Activated T-helper 2 cell treated with anti-CD3 and anti-CD28 coated beads, Interferon-gamma antibody, Interleukin-2, Interleukin-4, amounts not matched to agents 10 μg/mL and 5 μg/mL and 100 μg/mL, durations not matched to agents 14 hours and 24 hours and 36 hours (primary cell): ENCODE measurements at regions of chr1 and their contacts with region 1.

Region 1: GRCh38 chr1:192516776-192517297 is 58.7 kb upstream of the RGS1 start:
- DNase-seq: peak; percentile 69
- H3K4me3 Mint-ChIP-seq: peak overlapping the region; percentile 66
- H3K27ac Mint-ChIP-seq: peak overlapping the region; percentile 77
- H3K4me1 Mint-ChIP-seq: peaks cover 55% of the 10 kb centered on the region
- H3K27me3 Mint-ChIP-seq: peaks cover 2% of the 10 kb centered on the region

Region 2: GRCh38 chr1:192430644-192431043 is 86.2 kb before region 1 on chr1:
- intact Hi-C with region 1: no loop called
- DNase-seq: no peak
- H3K4me3 Mint-ChIP-seq: no peak overlapping the region
- H3K27ac Mint-ChIP-seq: no peak overlapping the region
- H3K4me1 Mint-ChIP-seq: no peaks in the 10 kb centered on the region
- H3K27me3 Mint-ChIP-seq: no peaks in the 10 kb centered on the region

Region 3: GRCh38 chr1:192477630-192478029 is 39.2 kb before region 1 on chr1:
- intact Hi-C with region 1: loop called (anchors 5 kb)
- DNase-seq: no peak
- H3K4me3 Mint-ChIP-seq: no peak overlapping the region
- H3K27ac Mint-ChIP-seq: no peak overlapping the region
- H3K4me1 Mint-ChIP-seq: peaks cover 3% of the 10 kb centered on the region
- H3K27me3 Mint-ChIP-seq: peaks cover 12% of the 10 kb centered on the region

Region 4: DNA sequence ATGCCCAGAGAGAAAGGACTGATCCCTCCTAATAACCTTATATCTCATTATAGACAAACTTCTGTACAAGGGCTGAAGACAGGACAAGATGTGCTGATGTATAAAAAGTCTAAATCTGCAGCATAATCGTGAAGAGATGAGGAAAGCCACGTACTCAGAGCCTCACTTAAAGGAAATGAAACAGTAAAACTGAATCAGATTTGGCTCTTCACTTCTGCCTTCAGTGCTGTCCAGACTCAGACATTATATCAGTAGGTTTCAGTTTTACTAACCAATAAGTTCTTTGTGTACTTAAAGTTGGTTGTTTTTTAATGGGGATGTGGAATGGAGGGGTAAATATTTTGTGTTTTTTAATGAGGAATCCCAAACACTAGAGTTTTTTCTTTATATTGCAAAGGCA is 13.4 kb after region 1 on chr1:
- intact Hi-C with region 1: loop called (anchors 1 kb)
- DNase-seq: no peak
- H3K4me3 Mint-ChIP-seq: peak overlapping the region; percentile 9
- H3K27ac Mint-ChIP-seq: no peak overlapping the region
- H3K4me1 Mint-ChIP-seq: peaks cover 39% of the 10 kb centered on the region
- H3K27me3 Mint-ChIP-seq: peaks cover 9% of the 10 kb centered on the region

Region 5: GRCh38 chr1:192545896-192546521 is 29.2 kb after region 1 on chr1:
- intact Hi-C with region 1: loop called (anchors 1 kb)
- DNase-seq: no peak
- H3K4me3 Mint-ChIP-seq: no peak overlapping the region
- H3K27ac Mint-ChIP-seq: peak overlapping the region; percentile 1
- H3K4me1 Mint-ChIP-seq: peaks cover 64% of the 10 kb centered on the region
- H3K27me3 Mint-ChIP-seq: no peaks in the 10 kb centered on the region

Region 6: GRCh38 chr1:192550922-192551534 is 34.2 kb after region 1 on chr1:
- intact Hi-C with region 1: loop called (anchors 1 kb)
- DNase-seq: no peak
- H3K4me3 Mint-ChIP-seq: no peak overlapping the region
- H3K27ac Mint-ChIP-seq: peak overlapping the region; percentile 64
- H3K4me1 Mint-ChIP-seq: peaks cover 60% of the 10 kb centered on the region
- H3K27me3 Mint-ChIP-seq: no peaks in the 10 kb centered on the region

Region 7: DNA sequence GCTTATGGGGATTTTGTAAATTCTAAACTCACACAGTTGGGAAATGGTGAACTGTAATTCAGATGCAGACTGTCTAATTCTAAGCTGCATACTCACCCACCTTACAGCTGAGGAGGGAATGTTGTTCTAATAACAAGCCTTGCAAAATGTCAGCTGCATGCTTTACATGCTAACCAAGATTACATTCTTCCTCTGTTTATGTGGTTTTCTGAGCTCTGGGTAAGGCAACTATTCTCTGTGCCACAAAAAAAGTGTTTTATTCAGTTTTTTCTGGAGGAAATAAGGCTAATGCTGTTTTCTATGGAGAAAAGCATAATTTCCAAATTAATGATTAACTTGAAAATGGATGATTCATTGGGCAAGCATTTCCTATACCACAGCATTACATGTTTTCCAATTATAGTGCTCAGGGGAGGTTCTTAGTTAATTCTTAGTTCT is 184.0 kb after region 1 on chr1:
- intact Hi-C with region 1: loop called (anchors 10 kb)
- DNase-seq: no peak
- H3K4me3 Mint-ChIP-seq: no peak overlapping the region
- H3K27ac Mint-ChIP-seq: no peak overlapping the region
- H3K4me1 Mint-ChIP-seq: peaks cover 17% of the 10 kb centered on the region
- H3K27me3 Mint-ChIP-seq: peaks cover 3% of the 10 kb centered on the region

Region 8: GRCh38 chr1:192936313-192937018 is 419.6 kb after region 1 on chr1:
- intact Hi-C with region 1: loop called (anchors 5 kb)
- DNase-seq: no peak
- H3K4me3 Mint-ChIP-seq: no peak overlapping the region
- H3K27ac Mint-ChIP-seq: peak overlapping the region; percentile 53
- H3K4me1 Mint-ChIP-seq: peaks cover 22% of the 10 kb centered on the region
- H3K27me3 Mint-ChIP-seq: no peaks in the 10 kb centered on the region